ENCODE measurements at regions of chr6 and their contacts with region 1.

Region 1: GRCh38 chr6:105819745-105820144 is 266.4 kb upstream of the PRDM1 start:
- DNase-seq: no peak
- CTCF ChIP-seq: no peak

Region 2: DNA sequence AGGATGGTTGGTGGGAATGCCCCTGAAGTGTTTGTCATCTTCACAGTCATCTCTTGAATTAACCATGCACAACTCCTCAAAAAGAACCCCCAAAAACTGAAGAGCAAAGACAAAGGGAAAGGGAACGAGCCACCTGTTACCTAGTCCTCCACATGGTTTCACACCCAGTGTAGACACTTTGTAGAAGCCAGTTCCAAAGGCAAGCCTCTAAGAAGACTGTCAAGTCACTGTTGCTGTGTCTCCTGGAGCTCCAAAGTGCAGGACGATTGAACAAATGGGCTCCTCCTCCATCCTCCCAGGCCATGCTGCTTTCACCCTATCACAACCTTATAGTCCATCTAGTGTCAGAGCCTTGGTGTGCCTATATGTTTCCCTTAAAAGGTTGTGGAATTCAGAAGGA is 11.2 kb before region 1 on chr6:
- CTCF ChIA-PET with region 1: no interaction called
- POLR2A ChIA-PET with region 1: no interaction called
- DNase-seq: no peak
- CTCF ChIP-seq: no peak

Region 3: GRCh38 chr6:105835373-105835772 is 15.6 kb after region 1 on chr6:
- CTCF ChIA-PET with region 1: interaction called, 12 read pairs
- POLR2A ChIA-PET with region 1: no interaction called
- DNase-seq: no peak
- CTCF ChIP-seq: peak; percentile 17